Activated CD8-positive, alpha-beta T cell treated with anti-CD3 and anti-CD28 coated beads, Interleukin-2, amount 10 ng/mL, durations not matched to agents 7 days and 5 days (primary cell): ENCODE measurements at regions of chrX and their contacts with region 1.

Region 1: GRCh38 chrX:132631579-132632232 is 142.9 kb upstream of the MBNL3 start:
- DNase-seq: no peak
- ATAC-seq: no peak
- H3K4me3 Mint-ChIP-seq: no peak overlapping the region
- H3K27ac Mint-ChIP-seq: no peak overlapping the region
- H3K4me1 Mint-ChIP-seq: no peaks in the 10 kb centered on the region
- H3K27me3 Mint-ChIP-seq: no peaks in the 10 kb centered on the region

Region 2: GRCh38 chrX:132292793-132293192 is 338.9 kb before region 1 on chrX:
- CTCF ChIA-PET with region 1: interaction called, 10 read pairs
- POLR2A ChIA-PET with region 1: no interaction called
- DNase-seq: peak; percentile 30
- ATAC-seq: peak; percentile 39
- H3K4me3 Mint-ChIP-seq: no peak overlapping the region
- H3K27ac Mint-ChIP-seq: no peak overlapping the region
- H3K4me1 Mint-ChIP-seq: no peaks in the 10 kb centered on the region
- H3K27me3 Mint-ChIP-seq: no peaks in the 10 kb centered on the region